ENCODE measurements at regions of chr14 and their contacts with region 1.

Region 1: DNA sequence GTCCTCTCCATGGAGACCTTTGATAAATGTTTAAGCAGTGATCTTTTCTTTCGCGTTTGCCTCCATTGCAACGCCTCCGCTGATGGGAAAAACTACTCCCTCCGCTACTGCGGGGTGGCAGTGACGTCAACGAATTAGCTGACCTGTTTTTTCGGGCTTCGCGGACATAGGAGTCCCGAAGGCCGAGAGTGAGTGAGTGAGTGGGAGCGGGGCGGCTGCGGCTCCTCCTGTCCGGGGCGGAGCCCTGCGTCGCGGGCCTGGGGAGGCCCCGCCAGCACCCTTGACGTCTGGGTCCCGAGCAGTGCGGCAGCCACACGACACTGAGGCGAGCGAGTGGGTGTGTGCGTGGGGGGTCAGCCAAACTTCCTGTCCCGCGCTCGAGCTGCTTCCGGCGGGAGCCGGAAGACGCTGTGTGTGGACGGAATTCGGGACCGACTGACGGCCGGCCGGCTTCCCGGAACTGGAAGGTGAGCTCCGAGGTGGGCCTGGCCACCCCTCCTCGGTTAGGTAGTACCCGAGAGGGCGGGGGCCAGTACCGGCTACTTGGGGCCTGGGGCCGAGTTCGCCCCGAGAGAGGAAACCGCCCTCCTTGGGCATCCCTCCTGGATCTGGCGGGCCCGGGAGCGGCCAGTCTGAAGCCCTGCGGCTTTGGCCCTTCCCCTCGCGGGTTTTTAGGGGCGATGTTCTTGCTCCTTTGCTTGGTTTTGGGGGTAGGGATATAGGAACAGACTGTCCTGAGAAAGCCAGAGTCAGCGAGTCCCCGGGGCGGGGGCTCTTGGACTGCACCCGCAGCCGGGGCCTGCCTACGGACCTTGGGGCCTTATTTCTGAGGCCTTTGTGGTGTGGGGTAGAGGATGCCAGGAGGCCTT is at the start of gene ZNF410:
- DNase-seq: peak; percentile 74 to 94 (median 83)
- ATAC-seq: peak; percentile 99
- H3K4me3 ChIP-seq: peak within 1 kb of the TSS; percentile 82
- H3K4me3 Mint-ChIP-seq: peak within 1 kb of the TSS; percentile 90 to 99 (median 98)
- H3K27ac ChIP-seq: peak within 1 kb of the TSS; percentile 97
- H3K27ac Mint-ChIP-seq: peak within 1 kb of the TSS; percentile 64 to 100 (median 99)
- H3K4me1 ChIP-seq: peaks cover 17 to 22% of the 10 kb centered on the region in 2 donors
- H3K4me1 Mint-ChIP-seq: peaks cover 24 to 56% (median 47%) of the 10 kb centered on the region in 7 donors
- H3K27me3 ChIP-seq: no peaks in the 10 kb centered on the region
- H3K27me3 Mint-ChIP-seq: no peaks in the 10 kb centered on the region
- total RNA-seq, gene ZNF410: 44.8 to 79.7 (median 51.1) TPM

Region 2: GRCh38 chr14:73851644-73852382 is 34.9 kb before region 1 on chr14 and contains the start of gene PTGR2:
- CTCF ChIA-PET with region 1: no interaction called
- POLR2A ChIA-PET with region 1: interaction called, 10 read pairs
- intact Hi-C with region 1: loop called (anchors 1 kb)
- DNase-seq: peak; percentile 79 to 92 (median 86)
- ATAC-seq: peak; percentile 98
- H3K4me3 ChIP-seq: peak within 1 kb of the TSS; percentile 76
- H3K4me3 Mint-ChIP-seq: peak within 1 kb of the TSS; percentile 88 to 99 (median 96)
- H3K27ac ChIP-seq: peak within 1 kb of the TSS; percentile 85
- H3K27ac Mint-ChIP-seq: peak within 1 kb of the TSS; percentile 92 to 99 (median 97)
- H3K4me1 ChIP-seq: peaks cover 8 to 9% of the 10 kb centered on the region in 2 donors
- H3K4me1 Mint-ChIP-seq: peaks cover 3 to 28% (median 21%) of the 10 kb centered on the region in 7 donors
- H3K27me3 ChIP-seq: no peaks in the 10 kb centered on the region
- H3K27me3 Mint-ChIP-seq: no peaks in the 10 kb centered on the region
- total RNA-seq, gene PTGR2: 1.2 to 7.9 (median 1.8) TPM

Region 3: DNA sequence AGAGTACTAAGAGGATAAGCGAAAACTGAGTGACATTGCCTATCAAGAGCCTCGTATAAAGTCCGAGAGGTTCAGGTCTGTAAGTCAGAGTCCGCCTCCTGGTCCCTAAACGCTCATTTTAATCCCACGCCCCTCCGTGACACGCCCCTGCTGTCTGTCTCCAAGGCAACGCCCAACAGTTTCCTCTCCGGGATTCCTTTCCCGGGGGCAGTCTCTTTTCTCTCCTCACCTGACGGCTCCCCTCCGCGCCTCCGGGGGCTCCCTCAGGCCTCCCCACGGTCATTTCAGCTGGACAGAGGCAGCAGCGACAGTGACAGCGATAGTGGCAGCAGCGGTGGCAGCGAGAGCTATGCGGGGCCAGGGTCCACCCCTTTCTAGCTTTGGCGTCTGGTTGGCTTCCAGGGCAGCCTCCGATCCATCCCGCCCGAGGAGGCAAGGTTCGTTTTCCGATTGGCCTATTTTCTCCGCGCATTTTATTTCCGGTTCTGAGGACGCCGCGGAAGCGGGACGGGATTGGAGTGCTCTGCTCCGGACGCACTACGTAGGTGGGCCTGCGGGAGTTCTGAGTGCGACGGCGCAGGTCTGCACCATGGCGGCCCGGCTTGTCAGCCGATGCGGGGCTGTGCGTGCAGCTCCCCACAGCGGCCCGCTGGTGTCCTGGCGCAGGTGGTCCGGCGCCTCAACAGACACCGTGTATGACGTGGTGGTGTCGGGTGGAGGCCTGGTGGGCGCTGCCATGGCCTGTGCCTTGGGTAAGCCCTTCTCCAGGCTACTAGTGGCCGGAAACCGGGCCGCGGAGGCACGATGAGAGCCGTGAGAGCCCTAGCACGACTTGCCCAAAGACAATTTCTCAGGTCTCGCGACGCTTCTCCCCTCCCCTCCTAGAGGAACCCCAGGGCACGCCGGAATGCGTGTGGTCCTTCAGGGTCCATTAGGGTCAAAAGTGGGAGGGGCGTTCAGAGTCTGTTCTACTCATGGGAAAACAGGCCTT is 63.4 kb after region 1 on chr14 and contains the starts of genes COQ6 and FAM161B:
- CTCF ChIA-PET with region 1: no interaction called
- POLR2A ChIA-PET with region 1: interaction called, 8 read pairs
- intact Hi-C with region 1: loop called (anchors 1 kb)
- DNase-seq: peak; percentile 82 to 97 (median 95)
- ATAC-seq: peak; percentile 96
- H3K4me3 ChIP-seq: peak within 1 kb of the TSS; percentile 92
- H3K4me3 Mint-ChIP-seq: peak within 1 kb of the TSS; percentile 96 to 99 (median 98)
- H3K27ac ChIP-seq: peak within 1 kb of the TSS; percentile 94
- H3K27ac Mint-ChIP-seq: peak within 1 kb of the TSS; percentile 93 to 98 (median 95)
- H3K4me1 ChIP-seq: peaks cover 0 to 4% of the 10 kb centered on the region in 2 donors
- H3K4me1 Mint-ChIP-seq: peaks cover 5 to 34% (median 27%) of the 10 kb centered on the region in 7 donors
- H3K27me3 ChIP-seq: no peaks in the 10 kb centered on the region
- H3K27me3 Mint-ChIP-seq: no peaks in the 10 kb centered on the region
- total RNA-seq, gene COQ6: 22.8 to 47.3 (median 36.4) TPM
- total RNA-seq, gene FAM161B: 1.8 to 6.6 (median 3.7) TPM

Region 4: GRCh38 chr14:74018586-74019407 is 132.1 kb after region 1 on chr14 and contains the starts of genes BBOF1 and ENTPD5:
- CTCF ChIA-PET with region 1: no interaction called
- POLR2A ChIA-PET with region 1: no interaction called
- intact Hi-C with region 1: loop called (anchors 1 to 2 kb)
- DNase-seq: peak; percentile 83 to 89 (median 88)
- ATAC-seq: peak; percentile 98
- H3K4me3 ChIP-seq: peak within 1 kb of the TSS; percentile 79
- H3K4me3 Mint-ChIP-seq: peak within 1 kb of the TSS; percentile 80 to 97 (median 94)
- H3K27ac ChIP-seq: peak within 1 kb of the TSS; percentile 93
- H3K27ac Mint-ChIP-seq: peak within 1 kb of the TSS; percentile 89 to 98 (median 96)
- H3K4me1 ChIP-seq: peaks cover 6 to 10% of the 10 kb centered on the region in 2 donors
- H3K4me1 Mint-ChIP-seq: peaks cover 7 to 24% (median 14%) of the 10 kb centered on the region in 7 donors
- H3K27me3 ChIP-seq: no peaks in the 10 kb centered on the region
- H3K27me3 Mint-ChIP-seq: peaks cover 0 to 2% (median 0%) of the 10 kb centered on the region in 5 donors
- total RNA-seq, gene BBOF1: 0.80 to 4.0 (median 2.6) TPM
- total RNA-seq, gene ENTPD5: 8.6 to 17.1 (median 11.2) TPM

Region 5: DNA sequence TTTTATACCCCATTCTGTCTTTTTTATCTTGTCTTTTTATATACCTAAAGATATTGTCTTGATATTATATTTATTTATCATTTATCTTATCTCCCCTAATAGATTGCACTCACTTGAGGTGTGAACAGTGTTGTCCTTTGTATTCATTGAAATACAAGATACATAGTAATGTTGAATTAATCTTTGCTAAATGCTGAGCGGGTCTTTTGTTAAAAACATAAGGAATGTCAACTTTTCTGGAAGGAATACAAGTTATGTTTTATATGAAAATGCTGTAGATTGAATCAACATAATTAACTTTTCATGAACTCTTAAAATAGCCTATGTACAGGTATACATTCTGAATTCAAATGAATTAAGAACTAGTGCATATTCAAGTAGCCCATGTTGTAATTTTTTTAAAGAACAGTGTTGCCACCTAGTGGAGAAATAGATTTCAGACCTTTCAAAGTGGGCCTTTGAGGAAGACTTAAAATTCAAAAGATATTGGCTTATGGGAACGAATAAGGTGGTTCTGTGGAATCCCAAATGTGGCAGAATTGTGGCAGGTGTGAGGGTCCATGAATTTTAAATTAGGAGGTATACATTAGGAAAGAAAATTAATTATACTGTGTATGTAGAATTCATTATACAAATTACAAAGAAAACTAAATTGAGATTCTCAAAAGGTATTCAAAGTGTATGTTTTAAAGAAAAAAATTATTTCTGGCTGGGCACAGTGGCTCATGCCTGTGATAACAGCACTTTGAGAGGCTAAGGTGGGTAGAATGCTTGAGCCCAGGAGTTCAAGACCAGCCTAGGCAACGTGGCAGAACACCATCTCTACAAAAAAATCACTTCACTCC is 151.6 kb after region 1 on chr14:
- CTCF ChIA-PET with region 1: no interaction called
- POLR2A ChIA-PET with region 1: no interaction called
- intact Hi-C with region 1: loop called in 1 of 2 experiments (anchors 5 kb)
- DNase-seq: peak in 7 of 9 donors; percentile 19 to 63 (median 49)
- ATAC-seq: peak; percentile 65
- H3K4me3 ChIP-seq: no peak overlapping the region
- H3K4me3 Mint-ChIP-seq: no peak overlapping the region
- H3K27ac ChIP-seq: no peak overlapping the region
- H3K27ac Mint-ChIP-seq: peak overlapping the region in 1 of 9 donors; percentile 29
- H3K4me1 ChIP-seq: no peaks in the 10 kb centered on the region
- H3K4me1 Mint-ChIP-seq: no peaks in the 10 kb centered on the region
- H3K27me3 ChIP-seq: no peaks in the 10 kb centered on the region
- H3K27me3 Mint-ChIP-seq: no peaks in the 10 kb centered on the region

Region 6: DNA sequence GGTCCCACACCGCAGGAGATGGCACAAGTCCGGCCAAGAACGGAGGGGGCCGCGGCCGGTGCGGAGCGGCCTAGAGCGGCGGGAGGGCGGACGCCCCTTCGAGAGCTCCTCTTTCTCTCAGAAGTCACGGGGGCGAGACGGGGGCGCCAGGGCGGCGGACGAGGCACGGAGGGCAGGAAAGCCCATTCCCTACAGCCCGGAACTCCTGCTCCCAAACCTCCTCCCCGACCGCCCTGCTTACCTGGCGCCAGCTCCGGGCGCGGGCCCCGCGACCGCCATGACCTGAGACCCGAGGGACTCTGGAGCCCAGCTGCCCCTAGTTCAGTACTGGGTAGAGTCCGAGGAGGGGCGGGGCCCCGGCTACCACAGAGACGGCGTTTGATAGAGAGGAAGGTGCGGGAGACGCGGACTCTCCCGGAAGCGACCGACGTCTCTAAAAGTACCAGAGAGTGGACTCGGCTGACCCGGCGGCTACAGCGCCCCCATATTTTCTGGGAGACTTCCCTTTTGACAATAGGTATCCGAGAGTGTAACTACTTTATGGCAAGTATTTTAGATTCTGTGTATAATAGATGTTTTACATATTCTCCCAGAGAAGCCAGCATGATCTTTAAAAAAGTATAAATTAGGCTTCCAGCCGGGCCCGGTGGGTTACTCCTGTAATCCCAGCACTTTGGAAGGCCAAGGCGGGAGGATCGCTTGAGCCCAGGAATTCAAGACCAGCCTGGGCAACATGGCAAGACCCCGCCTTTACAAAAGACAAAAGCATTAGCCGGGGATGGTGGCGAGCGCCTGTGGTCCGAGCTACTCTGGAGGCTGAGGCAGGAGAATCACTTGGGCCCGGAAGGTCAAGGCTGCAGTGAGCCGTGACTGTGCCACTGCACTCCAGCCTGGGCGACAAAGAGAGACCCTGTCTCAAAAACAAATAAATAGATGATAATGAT is 416.2 kb after region 1 on chr14 and contains the start of gene ABCD4:
- CTCF ChIA-PET with region 1: no interaction called
- POLR2A ChIA-PET with region 1: no interaction called
- intact Hi-C with region 1: loop called in 1 of 2 experiments (anchors 1 kb)
- DNase-seq: peak; percentile 50 to 85 (median 65)
- ATAC-seq: peak; percentile 95
- H3K4me3 ChIP-seq: peak within 1 kb of the TSS; percentile 87
- H3K4me3 Mint-ChIP-seq: peak within 1 kb of the TSS; percentile 90 to 100 (median 96)
- H3K27ac ChIP-seq: peak within 1 kb of the TSS; percentile 77
- H3K27ac Mint-ChIP-seq: peak within 1 kb of the TSS; percentile 81 to 99 (median 96)
- H3K4me1 ChIP-seq: peaks cover 17 to 19% of the 10 kb centered on the region in 2 donors
- H3K4me1 Mint-ChIP-seq: peaks cover 18 to 49% (median 33%) of the 10 kb centered on the region in 7 donors
- H3K27me3 ChIP-seq: no peaks in the 10 kb centered on the region
- H3K27me3 Mint-ChIP-seq: no peaks in the 10 kb centered on the region
- total RNA-seq, gene ABCD4: 57.6 to 109 (median 68.2) TPM